B cell (primary cell): ENCODE measurements at regions of chr19 and their contacts with region 1.

Region 1: DNA sequence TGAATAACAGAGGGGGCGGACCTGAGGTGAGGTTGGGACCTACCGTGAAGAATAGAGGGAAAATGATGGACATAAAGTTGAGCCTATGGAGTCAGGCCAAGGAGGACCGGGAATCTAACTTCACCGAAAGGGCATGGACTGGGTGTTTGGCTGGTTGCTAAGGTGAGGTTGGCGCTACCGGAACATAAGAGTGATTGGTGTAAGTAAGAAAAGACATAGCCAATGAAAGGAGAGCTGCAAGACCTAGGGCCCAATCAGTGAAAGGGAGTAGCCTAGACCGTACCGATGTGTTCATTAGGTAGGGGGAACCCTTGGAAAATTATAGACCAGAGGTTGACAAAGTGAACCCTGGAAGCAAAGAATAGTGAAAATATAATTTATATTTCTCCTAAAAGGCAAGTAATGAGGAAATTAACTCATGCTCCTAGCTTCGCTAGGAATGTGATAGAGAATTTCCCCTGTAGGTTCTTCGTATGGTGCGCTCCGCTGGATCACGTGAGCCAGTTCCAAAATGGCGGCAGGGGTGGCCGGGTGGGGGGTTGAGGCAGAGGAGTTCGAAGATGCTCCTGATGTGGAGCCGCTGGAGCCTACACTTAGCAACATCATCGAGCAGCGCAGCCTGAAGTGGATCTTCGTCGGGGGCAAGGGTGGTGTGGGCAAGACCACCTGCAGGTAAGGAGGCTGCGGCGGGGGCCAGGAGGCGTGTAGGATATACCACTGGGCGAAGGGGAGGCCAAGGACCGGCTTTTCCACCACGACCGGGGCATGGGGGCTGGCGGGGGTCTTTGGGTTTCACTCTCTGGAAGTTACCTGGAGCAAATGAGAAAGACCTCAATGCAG is at the start of gene GET3:
- DNase-seq: peak; percentile 93
- ATAC-seq: peak; percentile 76
- H3K4me3 ChIP-seq: peak within 1 kb of the TSS; percentile 67 to 93 (median 86)
- H3K4me3 Mint-ChIP-seq: peak within 1 kb of the TSS; percentile 100
- H3K27ac ChIP-seq: peak within 1 kb of the TSS; percentile 72 to 94
- H3K27ac Mint-ChIP-seq: peak within 1 kb of the TSS; percentile 99
- H3K4me1 ChIP-seq: peaks cover 36 to 43% of the 10 kb centered on the region in 2 donors
- H3K4me1 Mint-ChIP-seq: peaks cover 39% of the 10 kb centered on the region
- H3K27me3 ChIP-seq: no peaks in the 10 kb centered on the region
- H3K27me3 Mint-ChIP-seq: no peaks in the 10 kb centered on the region
- CTCF ChIP-seq: no peak
- total RNA-seq, gene GET3: 30.7 and 37.2 TPM in 2 replicates

Region 2: GRCh38 chr19:12551060-12551832 is 186.0 kb before region 1 on chr19 and contains the start of gene ZNF564:
- CTCF ChIA-PET with region 1: no interaction called
- POLR2A ChIA-PET with region 1: no interaction called
- intact Hi-C with region 1: loop called (anchors 1 kb)
- DNase-seq: peak; percentile 96
- ATAC-seq: peak; percentile 98
- H3K4me3 ChIP-seq: peak within 1 kb of the TSS; percentile 81 to 95 (median 86)
- H3K4me3 Mint-ChIP-seq: peak within 1 kb of the TSS; percentile 100
- H3K27ac ChIP-seq: peak within 1 kb of the TSS; percentile 70 to 87
- H3K27ac Mint-ChIP-seq: peak within 1 kb of the TSS; percentile 94
- H3K4me1 ChIP-seq: peaks cover 20 to 29% of the 10 kb centered on the region in 2 donors
- H3K4me1 Mint-ChIP-seq: peaks cover 45% of the 10 kb centered on the region
- H3K27me3 ChIP-seq: no peaks in the 10 kb centered on the region
- H3K27me3 Mint-ChIP-seq: no peaks in the 10 kb centered on the region
- CTCF ChIP-seq: no peak
- total RNA-seq, gene ZNF564: 31.8 and 35.8 TPM in 2 replicates

Region 3: GRCh38 chr19:12681074-12681951 is 55.9 kb before region 1 on chr19 and contains the start of gene DHPS:
- CTCF ChIA-PET with region 1: interaction called, 4 read pairs
- POLR2A ChIA-PET with region 1: interaction called, 14 read pairs
- intact Hi-C with region 1: loop called (anchors 1 kb)
- DNase-seq: peak; percentile 98
- ATAC-seq: peak; percentile 75
- H3K4me3 ChIP-seq: peak within 1 kb of the TSS; percentile 73 to 90 (median 86)
- H3K4me3 Mint-ChIP-seq: peak within 1 kb of the TSS; percentile 93
- H3K27ac ChIP-seq: peak within 1 kb of the TSS; percentile 89 to 95
- H3K27ac Mint-ChIP-seq: peak within 1 kb of the TSS; percentile 94
- H3K4me1 ChIP-seq: peaks cover 9 to 17% of the 10 kb centered on the region in 2 donors
- H3K4me1 Mint-ChIP-seq: peaks cover 24% of the 10 kb centered on the region
- H3K27me3 ChIP-seq: no peaks in the 10 kb centered on the region
- H3K27me3 Mint-ChIP-seq: no peaks in the 10 kb centered on the region
- CTCF ChIP-seq: no peak
- total RNA-seq, gene DHPS: 187 and 200 TPM in 2 replicates

Region 4: GRCh38 chr19:12757544-12758274 is 20.5 kb after region 1 on chr19:
- CTCF ChIA-PET with region 1: interaction called, 47 read pairs
- POLR2A ChIA-PET with region 1: no interaction called
- intact Hi-C with region 1: no loop called
- DNase-seq: peak; percentile 75
- ATAC-seq: peak; percentile 72
- H3K4me3 ChIP-seq: peak overlapping the region in 3 of 5 experiments; percentile 27 to 42 (median 37)
- H3K4me3 Mint-ChIP-seq: peak overlapping the region; percentile 52
- H3K27ac ChIP-seq: no peak overlapping the region
- H3K27ac Mint-ChIP-seq: no peak overlapping the region
- H3K4me1 ChIP-seq: peaks cover 7 to 8% of the 10 kb centered on the region in 2 donors
- H3K4me1 Mint-ChIP-seq: peaks cover 11% of the 10 kb centered on the region
- H3K27me3 ChIP-seq: peaks cover 0 to 28% (median 5%) of the 10 kb centered on the region in 4 experiments
- H3K27me3 Mint-ChIP-seq: peaks cover 23% of the 10 kb centered on the region
- CTCF ChIP-seq: peak; percentile 88

Region 5: DNA sequence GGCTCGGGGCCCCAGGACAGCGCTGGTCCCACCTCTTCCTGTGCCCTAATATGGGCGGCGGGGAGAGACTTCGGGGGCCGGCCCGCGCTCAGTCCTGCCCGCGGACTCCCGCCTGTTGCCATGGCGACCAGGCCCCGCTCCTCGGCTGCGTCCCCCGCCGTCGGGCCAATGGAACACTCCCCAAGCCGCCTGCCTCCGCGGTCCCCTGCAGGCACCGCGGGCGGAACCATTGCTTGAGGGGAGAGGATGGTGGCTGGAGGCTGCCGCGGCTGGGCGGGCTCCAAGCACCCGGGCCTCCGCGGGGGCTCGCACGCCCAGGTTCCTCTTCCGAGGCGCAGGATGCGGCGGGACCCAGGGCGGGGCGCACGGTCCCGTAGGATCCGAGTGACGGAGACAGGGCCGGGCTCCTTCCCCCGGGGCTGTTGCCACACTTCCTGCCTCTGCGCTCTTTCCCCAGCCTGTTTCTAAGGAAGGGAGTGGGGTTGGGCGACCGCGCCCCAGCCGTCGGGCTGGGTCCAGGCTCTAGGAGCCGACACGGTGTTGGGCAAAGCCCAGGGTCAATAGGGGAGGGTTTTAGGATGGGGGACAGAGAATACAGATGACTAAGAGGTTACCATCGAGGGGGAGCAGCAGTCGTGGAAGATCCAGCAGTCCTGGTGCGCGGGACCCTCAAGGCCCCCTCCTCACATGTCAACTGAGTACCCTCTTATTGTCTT is 52.8 kb after region 1 on chr19:
- CTCF ChIA-PET with region 1: interaction called, 8 read pairs
- POLR2A ChIA-PET with region 1: interaction called, 6 read pairs
- intact Hi-C with region 1: loop called (anchors 5 kb)
- DNase-seq: peak; percentile 99
- ATAC-seq: peak; percentile 46
- H3K4me3 ChIP-seq: peak overlapping the region; percentile 94 to 99 (median 97)
- H3K4me3 Mint-ChIP-seq: peak overlapping the region; percentile 97
- H3K27ac ChIP-seq: peak overlapping the region; percentile 95 to 97
- H3K27ac Mint-ChIP-seq: peak overlapping the region; percentile 99
- H3K4me1 ChIP-seq: peaks cover 52 to 64% of the 10 kb centered on the region in 2 donors
- H3K4me1 Mint-ChIP-seq: peaks cover 41% of the 10 kb centered on the region
- H3K27me3 ChIP-seq: no peaks in the 10 kb centered on the region
- H3K27me3 Mint-ChIP-seq: no peaks in the 10 kb centered on the region
- CTCF ChIP-seq: no peak

Region 6: DNA sequence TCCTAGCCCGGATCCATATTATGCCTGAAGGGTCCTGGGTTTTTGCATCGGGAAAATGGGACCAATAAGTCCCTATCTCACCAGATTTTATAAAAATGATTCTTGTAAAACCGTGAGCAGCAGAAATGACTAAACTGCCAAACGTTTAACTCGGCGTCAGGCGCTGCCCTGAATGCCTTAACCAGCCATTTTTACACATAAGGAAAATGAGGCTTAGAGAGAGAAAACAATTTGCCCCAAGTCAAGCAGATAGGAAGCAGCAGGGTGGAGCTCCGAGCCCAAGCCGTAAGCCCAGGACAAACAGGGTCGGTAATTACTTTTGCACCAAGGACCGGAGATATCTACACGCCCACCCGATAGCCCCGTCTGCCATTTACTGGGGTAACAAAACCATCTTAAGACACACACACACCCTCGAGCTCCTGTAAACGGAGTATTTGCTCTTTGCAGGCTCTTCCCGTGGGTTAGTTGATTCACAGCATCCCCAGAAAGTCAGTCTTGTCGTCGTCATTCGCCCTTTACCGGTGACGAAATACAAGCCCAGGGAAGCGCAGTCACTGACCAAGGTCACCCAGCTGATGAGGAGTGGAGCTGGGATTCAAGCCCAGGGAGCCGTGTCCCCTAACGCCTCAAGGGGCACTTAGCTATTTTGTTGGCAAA is 1011.1 kb after region 1 on chr19:
- CTCF ChIA-PET with region 1: no interaction called
- POLR2A ChIA-PET with region 1: no interaction called
- intact Hi-C with region 1: loop called (anchors 5 kb)
- DNase-seq: no peak
- ATAC-seq: no peak
- H3K4me3 ChIP-seq: peak overlapping the region; percentile 76 to 97 (median 86)
- H3K4me3 Mint-ChIP-seq: peak overlapping the region; percentile 90
- H3K27ac ChIP-seq: peak overlapping the region; percentile 71 to 94
- H3K27ac Mint-ChIP-seq: peak overlapping the region; percentile 82
- H3K4me1 ChIP-seq: peaks cover 11 to 15% of the 10 kb centered on the region in 2 donors
- H3K4me1 Mint-ChIP-seq: peaks cover 28% of the 10 kb centered on the region
- H3K27me3 ChIP-seq: no peaks in the 10 kb centered on the region
- H3K27me3 Mint-ChIP-seq: no peaks in the 10 kb centered on the region
- CTCF ChIP-seq: no peak